ENCODE measurements at regions of chr22 and their contacts with region 1.

Region 1: DNA sequence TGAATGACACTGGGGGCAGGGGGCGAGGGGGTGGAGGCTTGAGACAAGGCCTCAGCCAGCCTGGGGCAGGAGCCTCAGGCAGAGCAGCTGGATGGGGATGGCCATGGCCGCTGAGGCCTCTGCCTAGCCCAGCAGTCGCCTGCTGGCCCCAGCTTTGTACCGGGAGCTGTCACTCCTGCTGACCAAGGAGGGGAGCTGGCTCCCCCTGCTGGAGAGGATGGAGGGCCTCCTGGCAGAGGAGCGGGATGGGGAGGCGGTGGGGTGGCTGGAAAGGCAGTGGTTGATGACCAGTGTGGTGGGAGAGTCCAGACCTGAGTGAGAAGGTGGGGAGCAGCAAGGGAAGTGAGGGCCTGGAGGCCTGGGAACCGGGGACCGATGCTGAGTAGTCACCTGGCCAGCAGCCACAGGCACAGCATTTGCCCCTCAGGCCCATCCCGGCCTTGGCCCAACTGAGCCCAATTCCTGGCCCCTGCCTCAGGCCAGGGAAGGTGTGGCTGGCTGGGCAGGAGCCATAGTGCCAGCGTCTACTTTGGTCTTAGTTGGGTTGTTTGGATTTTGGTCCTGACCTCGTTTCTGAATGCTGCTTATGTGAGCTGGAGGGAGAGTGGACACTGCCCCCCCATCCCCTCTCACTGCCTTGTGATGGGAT is 6.0 kb upstream of the SUSD2 start:
- DNase-seq: peak; percentile 75
- H3K4me3 Mint-ChIP-seq: no peak overlapping the region
- H3K27ac Mint-ChIP-seq: peak overlapping the region; percentile 10
- H3K4me1 Mint-ChIP-seq: peaks cover 2% of the 10 kb centered on the region
- H3K27me3 Mint-ChIP-seq: no peaks in the 10 kb centered on the region

Region 2: DNA sequence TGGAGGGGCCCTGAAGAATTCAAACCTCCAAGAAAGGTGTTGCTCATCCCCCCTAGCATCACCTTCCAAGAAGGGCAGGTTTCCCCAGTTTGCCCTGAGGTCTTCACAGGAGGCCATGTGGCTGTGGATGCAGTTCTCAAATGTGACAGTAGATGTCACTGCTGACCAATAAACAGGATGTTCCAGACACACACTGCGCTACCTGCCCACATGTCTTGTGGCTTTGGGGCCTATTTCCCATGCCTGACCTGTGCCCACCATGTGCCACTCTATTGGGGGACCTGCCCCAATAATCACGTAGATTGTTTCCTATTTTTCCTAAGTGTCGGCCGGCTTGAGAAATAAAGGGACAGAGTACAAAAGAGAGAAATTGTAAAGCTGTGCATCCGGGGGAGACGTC is 190.9 kb before region 1 on chr22:
- CTCF ChIA-PET with region 1: interaction called, 3 read pairs
- intact Hi-C with region 1: loop called (anchors 5 kb)
- DNase-seq: peak; percentile 73
- H3K4me3 Mint-ChIP-seq: no peak overlapping the region
- H3K27ac Mint-ChIP-seq: no peak overlapping the region
- H3K4me1 Mint-ChIP-seq: peaks cover 3% of the 10 kb centered on the region
- H3K27me3 Mint-ChIP-seq: no peaks in the 10 kb centered on the region

Region 3: GRCh38 chr22:24005201-24005600 is 170.1 kb before region 1 on chr22 and contains the start of gene GSTT4:
- CTCF ChIA-PET with region 1: no interaction called
- intact Hi-C with region 1: loop called (anchors 10 kb)
- DNase-seq: no peak
- H3K4me3 Mint-ChIP-seq: no peak within 1 kb of the TSS
- H3K27ac Mint-ChIP-seq: no peak within 1 kb of the TSS
- H3K4me1 Mint-ChIP-seq: peaks cover under 1% of the 10 kb centered on the region
- H3K27me3 Mint-ChIP-seq: no peaks in the 10 kb centered on the region
- total RNA-seq, gene GSTT4: not detected

Region 4: GRCh38 chr22:24106385-24107381 is 68.6 kb before region 1 on chr22:
- CTCF ChIA-PET with region 1: interaction called, 7 read pairs
- intact Hi-C with region 1: loop called (anchors 2 kb)
- DNase-seq: peak; percentile 27
- H3K4me3 Mint-ChIP-seq: no peak overlapping the region
- H3K27ac Mint-ChIP-seq: peak overlapping the region; percentile 60
- H3K4me1 Mint-ChIP-seq: peaks cover 28% of the 10 kb centered on the region
- H3K27me3 Mint-ChIP-seq: no peaks in the 10 kb centered on the region

Region 5: DNA sequence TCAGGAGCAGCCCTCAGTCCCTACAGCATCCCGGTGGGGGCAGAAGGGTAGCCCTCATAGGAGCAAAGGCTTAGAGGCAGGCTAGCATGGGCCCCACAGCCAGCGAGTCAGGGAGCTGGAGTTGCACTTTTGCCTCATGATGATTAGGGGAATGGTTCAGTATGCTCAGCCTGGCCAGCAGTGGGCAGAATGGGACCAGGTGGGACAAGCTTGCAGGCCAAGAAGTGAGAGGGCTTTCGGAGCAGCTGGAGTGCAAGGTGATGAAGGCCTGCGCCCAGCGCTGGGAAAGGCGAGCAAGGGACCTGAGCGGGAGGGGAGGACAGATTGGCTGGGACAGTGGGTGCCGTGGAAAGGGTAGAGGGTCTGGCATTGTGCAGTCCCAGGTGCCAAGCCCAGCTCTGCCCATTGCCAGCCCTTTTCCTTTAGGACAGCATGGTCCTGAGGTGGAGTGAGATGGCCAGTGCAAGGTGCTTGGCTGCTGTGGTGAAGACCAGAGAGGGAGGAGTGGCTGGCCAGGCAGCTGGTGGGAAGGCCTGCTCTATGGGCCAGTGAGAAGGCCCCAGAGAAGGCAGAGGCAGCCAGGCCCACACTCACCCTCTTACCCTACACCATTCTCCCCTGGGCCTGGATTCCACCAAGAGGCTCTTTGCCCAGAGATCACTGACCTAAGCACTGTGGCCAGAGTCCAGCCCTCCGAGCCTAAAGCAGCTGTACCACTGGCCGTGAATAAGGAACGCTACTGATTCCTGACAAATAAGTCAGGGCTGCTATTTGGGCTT is 41.9 kb before region 1 on chr22:
- CTCF ChIA-PET with region 1: interaction called, 6 read pairs
- intact Hi-C with region 1: loop called (anchors 1 kb)
- DNase-seq: peak; percentile 47
- H3K4me3 Mint-ChIP-seq: no peak overlapping the region
- H3K27ac Mint-ChIP-seq: no peak overlapping the region
- H3K4me1 Mint-ChIP-seq: peaks cover 17% of the 10 kb centered on the region
- H3K27me3 Mint-ChIP-seq: no peaks in the 10 kb centered on the region

Region 6: DNA sequence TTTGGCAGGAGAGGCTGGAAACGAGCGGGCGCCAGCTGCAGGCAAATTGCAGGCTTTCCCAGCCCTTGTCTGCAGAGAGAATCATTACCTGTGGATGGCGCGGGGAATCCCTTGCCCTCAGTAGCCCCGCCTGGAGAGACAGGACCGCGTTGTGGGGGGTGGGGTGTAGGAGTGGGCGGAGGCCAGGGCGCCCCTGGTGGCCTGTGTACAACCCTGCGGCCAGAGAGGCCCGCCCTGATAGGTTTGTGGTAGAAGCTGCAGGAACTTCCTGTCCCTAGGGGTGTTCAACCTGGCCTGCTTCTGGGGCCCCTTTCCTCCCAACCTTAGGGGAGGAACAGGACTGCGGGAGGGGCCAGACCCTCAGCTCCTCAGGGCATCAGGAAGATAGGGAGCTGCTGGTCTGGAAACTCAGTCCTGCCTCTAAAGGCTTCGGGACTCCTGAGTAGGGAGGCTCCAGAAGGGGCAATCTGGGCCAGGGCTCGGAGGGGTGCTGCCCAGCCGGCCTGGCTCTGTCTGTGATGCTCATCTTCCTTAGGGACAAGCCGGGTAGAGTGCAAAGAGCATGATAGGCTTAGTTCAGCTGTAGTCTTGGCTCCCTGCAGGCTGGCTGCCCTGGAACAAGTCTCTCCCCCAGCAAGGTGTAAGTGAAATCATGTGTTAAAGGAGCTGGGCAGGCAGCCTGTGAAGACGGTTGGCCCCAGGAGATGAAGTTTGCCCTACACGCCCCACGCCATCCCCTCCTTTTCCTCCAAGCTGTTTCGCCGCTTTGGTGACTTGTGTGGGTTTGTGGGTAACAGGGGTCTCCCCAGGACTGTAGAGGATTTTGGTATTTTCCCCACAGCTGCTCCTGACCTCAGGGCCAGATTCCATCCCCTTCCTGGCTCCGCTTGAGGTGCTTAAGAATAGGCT is 18.1 kb before region 1 on chr22:
- CTCF ChIA-PET with region 1: interaction called, 42 read pairs
- intact Hi-C with region 1: no loop called
- DNase-seq: peak; percentile 92
- H3K4me3 Mint-ChIP-seq: peak overlapping the region; percentile 73
- H3K27ac Mint-ChIP-seq: peak overlapping the region; percentile 26
- H3K4me1 Mint-ChIP-seq: peaks cover 72% of the 10 kb centered on the region
- H3K27me3 Mint-ChIP-seq: no peaks in the 10 kb centered on the region

Region 7: DNA sequence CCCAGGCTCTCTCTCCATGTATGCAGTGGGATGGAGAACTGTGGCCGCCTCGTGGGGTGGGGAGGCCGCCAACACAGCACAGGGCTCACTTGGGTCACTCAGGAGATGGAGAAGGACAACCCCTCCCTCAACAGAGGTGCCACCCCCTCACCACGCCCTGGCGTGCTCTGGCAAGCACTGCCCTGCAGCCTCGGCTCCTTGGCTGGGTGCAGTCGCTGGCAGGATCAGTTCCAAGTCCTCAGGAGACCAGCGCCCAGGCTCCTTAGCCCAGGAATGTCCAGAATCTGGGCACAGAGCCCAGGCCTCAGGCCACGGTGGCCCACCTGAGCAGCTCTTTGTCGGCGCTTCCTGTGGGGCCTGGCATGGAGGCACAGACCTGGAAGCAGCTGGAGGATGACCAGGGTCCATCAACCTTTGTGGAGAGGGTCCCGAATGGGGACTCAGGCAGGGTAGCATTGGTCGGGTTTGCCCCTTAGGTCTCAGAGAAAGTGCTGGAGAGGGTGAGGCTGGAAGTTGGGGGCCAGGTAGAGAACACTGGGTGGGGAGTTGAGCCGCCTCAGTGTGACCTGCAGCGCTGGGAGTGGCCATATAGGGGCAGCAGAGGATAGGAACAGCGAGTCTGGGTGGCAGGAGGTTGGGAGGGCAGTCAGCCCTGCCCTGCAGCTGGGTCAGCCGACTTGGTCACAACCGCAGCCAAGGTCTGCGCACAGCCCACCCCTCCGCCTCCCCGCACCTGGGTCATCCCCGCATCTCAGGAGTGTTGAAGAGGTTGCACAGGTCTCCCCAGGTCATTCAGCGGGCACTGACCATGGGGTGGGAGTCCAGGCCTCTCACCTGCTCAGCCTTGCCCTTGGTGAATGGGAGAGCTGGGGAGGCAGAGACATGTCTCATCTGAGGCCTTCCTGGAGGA is 14.2 kb after region 1 on chr22:
- CTCF ChIA-PET with region 1: no interaction called
- intact Hi-C with region 1: no loop called
- DNase-seq: peak; percentile 64
- H3K4me3 Mint-ChIP-seq: no peak overlapping the region
- H3K27ac Mint-ChIP-seq: no peak overlapping the region
- H3K4me1 Mint-ChIP-seq: no peaks in the 10 kb centered on the region
- H3K27me3 Mint-ChIP-seq: no peaks in the 10 kb centered on the region

Measured in activated naive CD4-positive, alpha-beta T cell treated with anti-CD3 and anti-CD28 coated beads for 36 hours (primary cell).